Activated CD8-positive, alpha-beta T cell treated with anti-CD3 and anti-CD28 coated beads for 36 hours (primary cell): ENCODE measurements at regions of chr5 and their contacts with region 1.

Region 1: GRCh38 chr5:82225525-82226172 is 52.5 kb downstream of the RPS23 start:
- DNase-seq: peak; percentile 73
- ATAC-seq: peak; percentile 90
- H3K4me3 Mint-ChIP-seq: no peak overlapping the region
- H3K27ac Mint-ChIP-seq: no peak overlapping the region
- H3K4me1 Mint-ChIP-seq: peaks cover 3% of the 10 kb centered on the region
- H3K27me3 Mint-ChIP-seq: no peaks in the 10 kb centered on the region
- CTCF ChIP-seq: peak; percentile 86

Region 2: DNA sequence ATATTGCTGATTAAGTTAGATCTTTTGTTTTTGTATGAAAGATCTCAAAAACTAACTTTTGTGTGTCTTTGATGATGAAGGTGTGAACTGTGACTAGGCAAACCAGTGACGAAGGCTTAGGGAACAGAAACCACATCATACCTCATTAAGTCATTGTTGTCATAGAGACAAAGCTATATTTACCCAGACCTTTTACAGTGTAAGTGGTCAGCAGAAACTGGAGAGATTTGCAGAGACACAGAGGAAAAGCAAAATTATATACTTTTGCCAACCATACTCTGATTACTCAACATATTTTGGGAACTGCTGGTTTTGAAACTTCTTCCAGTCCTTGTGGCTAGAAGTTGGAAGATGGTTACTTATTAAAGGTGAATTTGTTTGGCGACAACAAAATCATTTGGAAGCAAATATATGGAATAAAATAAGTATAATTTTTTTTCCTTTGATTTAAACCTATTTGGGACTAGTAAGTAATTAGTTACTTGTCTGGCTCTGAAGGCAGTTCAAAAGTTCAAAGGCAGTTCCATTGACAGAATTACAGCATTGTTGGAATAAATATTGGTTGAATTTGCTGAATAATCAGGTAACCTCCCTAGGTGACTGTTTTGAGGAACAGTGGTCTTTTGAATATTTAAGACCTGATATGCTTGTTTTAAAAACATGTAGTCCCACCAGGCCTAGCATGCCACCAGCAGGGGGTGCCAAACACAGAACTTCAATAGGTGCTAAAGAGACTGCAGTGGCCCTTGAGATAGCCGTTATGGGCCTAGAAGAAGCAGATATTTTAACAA is 51.3 kb before region 1 on chr5:
- CTCF ChIA-PET with region 1: interaction called, 11 read pairs
- POLR2A ChIA-PET with region 1: no interaction called
- intact Hi-C with region 1: loop called (anchors 5 kb)
- DNase-seq: peak; percentile 89
- ATAC-seq: peak; percentile 77
- H3K4me3 Mint-ChIP-seq: no peak overlapping the region
- H3K27ac Mint-ChIP-seq: no peak overlapping the region
- H3K4me1 Mint-ChIP-seq: peaks cover 10% of the 10 kb centered on the region
- H3K27me3 Mint-ChIP-seq: no peaks in the 10 kb centered on the region
- CTCF ChIP-seq: peak; percentile 75